Activated B cell treated with CpG ODN at 0.5 μM for 24 hours (primary cell): ENCODE measurements at regions of chr19 and their contacts with region 1.

Region 1: DNA sequence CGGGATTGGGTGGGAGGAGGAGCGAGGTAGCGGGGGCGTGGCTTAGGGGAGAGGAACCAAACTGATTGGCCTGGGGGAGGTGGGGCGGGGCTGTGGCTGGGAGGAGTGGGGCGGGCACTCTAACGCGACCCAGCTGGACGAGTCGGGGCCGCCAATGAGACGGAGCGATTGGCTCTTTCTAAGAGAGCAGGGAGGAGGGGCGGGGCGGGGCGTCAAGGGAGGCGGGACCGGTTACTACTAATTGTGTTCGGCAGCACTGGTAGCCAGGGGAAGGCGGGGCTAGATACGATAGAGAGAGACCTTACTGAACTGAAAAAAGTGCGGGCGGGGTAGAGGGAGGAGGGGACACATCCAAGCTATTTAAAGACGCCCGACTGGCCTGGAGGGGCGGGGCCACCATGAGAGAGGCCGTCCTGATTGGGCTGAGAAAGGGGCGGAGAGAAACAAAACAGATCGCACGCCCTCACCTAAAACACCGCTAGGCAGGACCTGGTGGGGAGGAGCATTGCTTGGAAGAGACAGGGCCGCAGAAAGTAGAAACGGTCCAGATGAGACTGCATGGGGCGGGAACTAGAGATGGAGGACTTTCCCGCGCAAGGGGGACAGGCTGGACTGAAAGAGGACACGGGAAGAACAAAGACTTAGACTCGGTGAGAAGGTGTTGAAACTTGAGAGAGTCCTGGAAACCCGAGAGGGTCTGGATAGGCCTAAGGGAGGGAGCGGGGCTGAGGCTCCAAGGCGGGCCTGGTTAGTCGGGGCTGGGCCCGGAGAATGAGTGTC is at the start of gene KCNC3:
- DNase-seq: peak; percentile 91
- ATAC-seq: peak; percentile 64
- H3K4me3 Mint-ChIP-seq: peak within 1 kb of the TSS; percentile 93
- H3K27ac Mint-ChIP-seq: peak within 1 kb of the TSS; percentile 98
- H3K4me1 Mint-ChIP-seq: peaks cover 78% of the 10 kb centered on the region
- H3K27me3 Mint-ChIP-seq: peaks cover 5% of the 10 kb centered on the region
- CTCF ChIP-seq: no peak
- total RNA-seq, gene KCNC3: 34.5 and 44.3 TPM in 2 replicates

Region 2: DNA sequence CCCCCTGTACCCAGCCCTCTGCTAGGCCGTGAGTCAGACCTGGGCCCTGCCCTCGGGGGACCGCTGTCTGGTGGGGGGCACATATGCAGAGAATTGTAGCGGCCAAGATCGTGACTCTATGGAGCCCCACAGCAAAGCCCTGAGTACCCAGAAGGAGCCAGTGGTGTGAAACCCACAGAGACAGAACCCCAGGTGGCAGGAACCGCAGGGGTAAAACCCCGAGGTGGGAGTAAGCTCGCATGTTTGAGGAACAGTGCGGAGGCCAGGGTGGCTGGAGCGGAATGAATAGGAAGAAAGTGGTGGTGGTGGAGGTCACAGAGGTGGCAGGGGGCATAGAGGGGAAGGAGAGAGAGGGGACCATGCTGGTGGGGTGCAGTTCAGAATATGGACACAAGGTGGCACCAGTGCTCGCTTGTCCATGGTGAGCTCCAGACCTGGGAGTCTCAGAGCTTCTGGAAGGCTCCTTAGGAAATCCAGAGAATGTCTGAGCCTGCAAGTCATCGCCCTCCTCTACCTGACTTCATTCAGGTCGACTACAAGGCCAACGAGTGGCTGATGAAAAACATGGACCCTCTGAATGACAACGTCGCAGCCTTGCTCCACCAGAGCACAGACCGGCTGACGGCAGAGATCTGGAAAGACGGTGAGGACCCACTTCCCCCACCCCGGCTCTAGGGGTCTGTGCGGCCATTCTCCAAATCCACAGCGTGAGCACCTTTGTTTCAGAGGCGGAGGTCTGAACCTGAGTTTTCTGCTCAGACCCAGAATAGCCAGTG is 77.0 kb before region 1 on chr19:
- CTCF ChIA-PET with region 1: interaction called, 3 read pairs
- POLR2A ChIA-PET with region 1: no interaction called
- intact Hi-C with region 1: loop called (anchors 5 kb)
- DNase-seq: peak; percentile 40
- ATAC-seq: peak; percentile 64
- H3K4me3 Mint-ChIP-seq: no peak overlapping the region
- H3K27ac Mint-ChIP-seq: no peak overlapping the region
- H3K4me1 Mint-ChIP-seq: peaks cover 5% of the 10 kb centered on the region
- H3K27me3 Mint-ChIP-seq: peaks cover 15% of the 10 kb centered on the region
- CTCF ChIP-seq: no peak

Region 3: DNA sequence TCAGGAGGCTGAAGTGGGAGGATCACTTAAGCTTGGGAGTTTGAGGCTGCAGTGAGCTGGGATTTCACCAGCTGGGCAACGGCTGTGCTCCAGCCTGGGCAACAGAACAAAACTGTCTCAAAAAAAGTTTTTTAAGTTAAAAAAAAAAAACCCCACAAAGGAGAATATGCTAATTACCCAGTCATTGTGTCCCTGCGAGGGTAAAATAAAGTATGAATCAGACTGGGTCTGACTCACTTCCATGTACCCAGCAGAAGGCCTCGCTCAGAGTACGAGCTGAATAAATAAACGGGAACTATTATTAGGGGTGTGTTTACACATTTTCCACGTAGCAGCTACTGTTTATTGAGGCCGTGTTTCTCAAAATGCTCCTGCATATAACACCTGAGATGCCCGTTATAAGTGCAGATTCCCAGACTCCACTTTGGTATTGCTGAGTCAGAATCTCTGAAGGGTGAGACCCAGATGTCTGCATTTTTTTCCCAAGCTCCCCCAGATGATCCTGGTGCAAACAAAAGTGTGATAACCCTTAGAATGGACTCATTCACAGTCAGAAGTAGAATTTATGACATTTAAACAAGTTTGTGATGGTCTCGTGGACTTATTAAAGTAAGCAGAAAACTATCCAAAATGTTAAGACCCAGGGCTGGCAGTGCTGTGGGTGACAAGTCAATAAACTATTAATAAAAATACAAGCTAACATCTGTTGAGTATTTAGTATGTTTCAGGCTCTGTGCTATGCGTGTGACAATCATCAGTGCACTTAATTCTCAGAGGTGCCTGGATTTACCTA is 28.3 kb before region 1 on chr19:
- CTCF ChIA-PET with region 1: no interaction called
- POLR2A ChIA-PET with region 1: no interaction called
- intact Hi-C with region 1: no loop called
- DNase-seq: no peak
- ATAC-seq: peak; percentile 64
- H3K4me3 Mint-ChIP-seq: no peak overlapping the region
- H3K27ac Mint-ChIP-seq: no peak overlapping the region
- H3K4me1 Mint-ChIP-seq: no peaks in the 10 kb centered on the region
- H3K27me3 Mint-ChIP-seq: peaks cover 18% of the 10 kb centered on the region
- CTCF ChIP-seq: no peak

Region 4: GRCh38 chr19:50341091-50341564 is 11.8 kb after region 1 on chr19:
- CTCF ChIA-PET with region 1: interaction called, 14 read pairs
- POLR2A ChIA-PET with region 1: interaction called, 408 read pairs
- intact Hi-C with region 1: loop called (anchors 1 kb)
- DNase-seq: no peak
- ATAC-seq: peak; percentile 65
- H3K4me3 Mint-ChIP-seq: peak overlapping the region; percentile 81
- H3K27ac Mint-ChIP-seq: peak overlapping the region; percentile 92
- H3K4me1 Mint-ChIP-seq: peaks cover 81% of the 10 kb centered on the region
- H3K27me3 Mint-ChIP-seq: no peaks in the 10 kb centered on the region
- CTCF ChIP-seq: no peak

Region 5: GRCh38 chr19:50376166-50377050 is 47.1 kb after region 1 on chr19 and contains the start of gene NR1H2:
- CTCF ChIA-PET with region 1: no interaction called
- POLR2A ChIA-PET with region 1: interaction called, 6 read pairs
- intact Hi-C with region 1: loop called (anchors 1 kb)
- DNase-seq: peak; percentile 90
- ATAC-seq: peak; percentile 88
- H3K4me3 Mint-ChIP-seq: peak within 1 kb of the TSS; percentile 99
- H3K27ac Mint-ChIP-seq: peak within 1 kb of the TSS; percentile 99
- H3K4me1 Mint-ChIP-seq: peaks cover 14% of the 10 kb centered on the region
- H3K27me3 Mint-ChIP-seq: no peaks in the 10 kb centered on the region
- CTCF ChIP-seq: no peak
- total RNA-seq, gene NR1H2: 66.9 and 79.5 TPM in 2 replicates

Region 6: DNA sequence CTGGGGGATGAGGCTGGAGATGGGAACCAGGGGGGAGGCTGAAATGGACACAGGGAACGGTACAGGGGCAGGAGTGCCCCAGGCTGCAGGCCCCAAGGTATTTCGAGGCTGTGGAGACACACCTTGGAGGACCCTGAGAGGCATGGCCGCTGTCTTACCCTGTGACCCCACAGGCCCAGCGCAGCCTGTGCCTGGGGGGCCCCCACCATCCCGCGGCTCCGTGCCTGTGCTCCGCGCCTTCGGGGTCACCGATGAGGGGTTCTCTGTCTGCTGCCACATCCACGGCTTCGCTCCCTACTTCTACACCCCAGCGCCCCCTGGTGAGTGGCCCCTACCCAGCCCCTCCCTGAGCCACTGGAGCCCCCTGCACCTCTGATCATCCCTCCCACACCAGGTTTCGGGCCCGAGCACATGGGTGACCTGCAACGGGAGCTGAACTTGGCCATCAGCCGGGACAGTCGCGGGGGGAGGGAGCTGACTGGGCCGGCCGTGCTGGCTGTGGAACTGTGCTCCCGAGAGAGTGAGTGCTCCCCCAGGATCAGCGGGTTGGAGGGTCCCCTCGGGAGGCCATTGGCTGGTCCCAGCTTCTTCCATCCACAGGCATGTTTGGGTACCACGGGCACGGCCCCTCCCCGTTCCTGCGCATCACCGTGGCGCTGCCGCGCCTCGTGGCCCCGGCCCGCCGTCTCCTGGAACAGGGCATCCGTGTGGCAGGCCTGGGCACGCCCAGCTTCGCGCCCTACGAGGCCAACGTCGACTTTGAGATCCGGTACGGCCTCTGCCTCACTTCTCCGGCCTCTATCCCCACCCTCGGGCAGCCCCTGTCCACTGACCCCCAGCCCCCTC is 72.5 kb after region 1 on chr19:
- CTCF ChIA-PET with region 1: no interaction called
- POLR2A ChIA-PET with region 1: no interaction called
- intact Hi-C with region 1: no loop called
- DNase-seq: no peak
- ATAC-seq: no peak
- H3K4me3 Mint-ChIP-seq: no peak overlapping the region
- H3K27ac Mint-ChIP-seq: no peak overlapping the region
- H3K4me1 Mint-ChIP-seq: no peaks in the 10 kb centered on the region
- H3K27me3 Mint-ChIP-seq: no peaks in the 10 kb centered on the region
- CTCF ChIP-seq: no peak

Region 7: DNA sequence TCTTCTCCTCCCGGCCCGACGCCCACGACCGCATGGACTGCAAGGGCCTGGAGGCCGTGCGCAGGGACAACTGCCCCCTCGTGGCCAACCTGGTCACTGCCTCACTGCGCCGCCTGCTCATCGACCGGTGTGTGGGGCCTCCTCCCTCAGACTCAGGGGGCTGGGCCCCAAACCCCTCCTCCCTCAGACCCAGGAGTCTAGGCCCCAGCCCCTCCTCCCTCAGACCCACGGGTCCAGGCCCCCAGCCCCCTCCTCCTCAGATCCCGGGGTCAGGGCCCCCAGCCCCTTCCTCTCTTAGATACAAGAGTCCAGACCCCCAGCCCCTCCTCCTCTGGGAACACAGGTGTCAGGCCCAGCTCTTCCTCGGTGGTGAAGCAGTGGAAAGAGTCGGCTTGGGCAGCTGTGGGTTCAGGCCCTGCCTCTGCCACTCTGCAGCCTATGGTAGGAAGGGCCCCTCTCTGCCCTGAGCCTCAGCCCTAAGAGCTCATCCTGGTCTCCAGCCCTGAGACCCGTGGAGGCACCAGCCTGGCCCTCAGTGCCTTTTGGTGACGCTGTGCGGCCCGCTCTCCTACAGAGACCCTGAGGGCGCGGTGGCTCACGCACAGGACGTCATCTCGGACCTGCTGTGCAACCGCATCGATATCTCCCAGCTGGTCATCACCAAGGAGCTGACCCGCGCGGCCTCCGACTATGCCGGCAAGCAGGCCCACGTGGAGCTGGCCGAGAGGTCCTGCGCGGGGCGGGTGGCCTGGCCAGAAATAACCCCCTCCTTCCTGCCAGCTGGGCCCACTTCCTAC is 85.7 kb after region 1 on chr19:
- CTCF ChIA-PET with region 1: no interaction called
- POLR2A ChIA-PET with region 1: interaction called, 13 read pairs
- intact Hi-C with region 1: loop called (anchors 1 kb)
- DNase-seq: peak; percentile 84
- ATAC-seq: peak; percentile 32
- H3K4me3 Mint-ChIP-seq: peak overlapping the region; percentile 70
- H3K27ac Mint-ChIP-seq: peak overlapping the region; percentile 95
- H3K4me1 Mint-ChIP-seq: peaks cover 39% of the 10 kb centered on the region
- H3K27me3 Mint-ChIP-seq: no peaks in the 10 kb centered on the region
- CTCF ChIP-seq: no peak

Region 8: GRCh38 chr19:50461066-50461875 is 131.9 kb after region 1 on chr19:
- CTCF ChIA-PET with region 1: interaction called, 3 read pairs
- POLR2A ChIA-PET with region 1: interaction called, 10 read pairs
- intact Hi-C with region 1: no loop called
- DNase-seq: peak; percentile 61
- ATAC-seq: peak; percentile 65
- H3K4me3 Mint-ChIP-seq: peak overlapping the region; percentile 44
- H3K27ac Mint-ChIP-seq: peak overlapping the region; percentile 90
- H3K4me1 Mint-ChIP-seq: peaks cover 24% of the 10 kb centered on the region
- H3K27me3 Mint-ChIP-seq: no peaks in the 10 kb centered on the region
- CTCF ChIP-seq: peak; percentile 29

Region 9: GRCh38 chr19:50537762-50538230 is 208.5 kb after region 1 on chr19:
- CTCF ChIA-PET with region 1: no interaction called
- POLR2A ChIA-PET with region 1: no interaction called
- intact Hi-C with region 1: no loop called
- DNase-seq: peak; percentile 41
- ATAC-seq: no peak
- H3K4me3 Mint-ChIP-seq: no peak overlapping the region
- H3K27ac Mint-ChIP-seq: no peak overlapping the region
- H3K4me1 Mint-ChIP-seq: no peaks in the 10 kb centered on the region
- H3K27me3 Mint-ChIP-seq: peaks cover 16% of the 10 kb centered on the region
- CTCF ChIP-seq: no peak

Region 10: GRCh38 chr19:50804420-50805272 is 475.3 kb after region 1 on chr19:
- CTCF ChIA-PET with region 1: no interaction called
- POLR2A ChIA-PET with region 1: interaction called, 10 read pairs
- intact Hi-C with region 1: loop called (anchors 1 kb)
- DNase-seq: peak; percentile 94
- ATAC-seq: peak; percentile 98
- H3K4me3 Mint-ChIP-seq: peak overlapping the region; percentile 100
- H3K27ac Mint-ChIP-seq: peak overlapping the region; percentile 100
- H3K4me1 Mint-ChIP-seq: peaks cover 37% of the 10 kb centered on the region
- H3K27me3 Mint-ChIP-seq: no peaks in the 10 kb centered on the region
- CTCF ChIP-seq: no peak

Region 11: DNA sequence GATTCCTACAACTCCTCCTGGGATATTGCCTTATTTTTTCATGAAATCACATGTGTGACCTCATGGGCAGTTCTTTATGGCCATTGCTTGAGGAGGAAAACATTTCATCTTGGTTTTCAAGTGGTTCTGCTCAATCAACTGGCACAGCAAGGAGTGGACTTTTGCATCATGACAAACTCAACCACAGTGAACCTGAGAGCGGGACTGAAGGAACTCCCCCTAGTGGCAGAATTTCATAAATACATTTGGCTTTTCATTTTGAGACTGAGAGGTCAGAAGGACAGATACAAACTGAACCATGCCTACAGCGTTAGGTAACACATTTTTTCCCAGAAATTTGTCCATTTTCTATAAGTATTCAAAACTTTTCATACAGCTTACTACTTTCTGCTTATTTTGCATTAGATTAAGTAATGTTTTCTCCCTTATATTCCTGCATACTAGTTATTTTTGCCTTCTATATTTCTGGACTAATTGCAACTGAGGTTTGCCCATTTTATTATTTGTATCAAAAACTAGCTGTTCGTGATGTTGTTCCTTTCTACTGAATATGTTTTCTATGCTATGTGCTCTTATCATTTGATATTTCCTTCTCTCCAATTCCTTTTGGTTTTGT is 1185.6 kb after region 1 on chr19:
- CTCF ChIA-PET with region 1: no interaction called
- POLR2A ChIA-PET with region 1: no interaction called
- intact Hi-C with region 1: no loop called
- DNase-seq: no peak
- ATAC-seq: no peak
- H3K4me3 Mint-ChIP-seq: no peak overlapping the region
- H3K27ac Mint-ChIP-seq: no peak overlapping the region
- H3K4me1 Mint-ChIP-seq: peaks cover 7% of the 10 kb centered on the region
- H3K27me3 Mint-ChIP-seq: peaks cover 2% of the 10 kb centered on the region
- CTCF ChIP-seq: peak; percentile 72